ENCODE measurements at regions of chr1 and their contacts with region 1.

Region 1: GRCh38 chr1:9784508-9785133 is 39.1 kb downstream of the CLSTN1 start:
- DNase-seq: peak; percentile 84
- H3K4me3 Mint-ChIP-seq: no peak overlapping the region
- H3K27ac Mint-ChIP-seq: no peak overlapping the region
- H3K4me1 Mint-ChIP-seq: peaks cover 54% of the 10 kb centered on the region
- H3K27me3 Mint-ChIP-seq: no peaks in the 10 kb centered on the region

Region 2: DNA sequence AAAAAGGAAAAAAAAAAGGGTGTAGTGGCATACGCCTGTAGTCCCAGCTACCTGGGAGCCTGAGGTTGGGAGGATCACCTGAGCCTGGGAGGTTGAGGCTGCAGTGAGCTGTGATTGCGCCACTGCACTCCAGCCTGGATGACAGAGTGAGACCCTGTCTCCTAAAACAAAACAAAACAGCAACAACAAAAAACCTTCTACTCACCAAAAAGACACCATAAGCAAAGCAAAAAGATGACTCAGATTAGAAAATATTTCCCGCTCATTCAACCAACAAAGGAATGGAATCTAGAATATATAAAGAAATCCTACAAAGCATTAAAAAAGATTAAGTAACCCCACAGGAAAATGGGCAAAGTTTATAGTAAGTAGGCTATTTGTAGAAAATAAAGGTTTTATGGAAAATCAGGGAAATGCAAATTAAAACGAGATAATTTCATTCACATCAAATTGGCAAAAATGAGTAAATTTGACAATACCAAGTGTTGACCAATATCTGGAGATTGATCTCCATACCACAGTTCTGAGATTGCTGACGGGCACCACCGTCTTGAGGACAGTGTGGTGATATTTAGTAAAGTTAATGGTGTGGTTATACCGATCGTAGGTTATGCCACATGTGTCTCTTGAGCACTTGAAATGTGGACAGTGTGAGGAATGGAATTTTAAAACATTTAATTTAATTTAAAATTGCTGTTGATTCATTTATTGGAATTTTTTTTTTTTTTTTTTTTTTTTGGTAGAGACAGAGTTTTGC is 79.1 kb before region 1 on chr1:
- CTCF ChIA-PET with region 1: no interaction called
- POLR2A ChIA-PET with region 1: no interaction called
- DNase-seq: no peak
- H3K4me3 Mint-ChIP-seq: no peak overlapping the region
- H3K27ac Mint-ChIP-seq: peak overlapping the region; percentile 56
- H3K4me1 Mint-ChIP-seq: peaks cover 70% of the 10 kb centered on the region
- H3K27me3 Mint-ChIP-seq: no peaks in the 10 kb centered on the region

Region 3: GRCh38 chr1:9852410-9853248 is 68.0 kb after region 1 on chr1:
- CTCF ChIA-PET with region 1: no interaction called
- POLR2A ChIA-PET with region 1: no interaction called
- DNase-seq: no peak
- H3K4me3 Mint-ChIP-seq: no peak overlapping the region
- H3K27ac Mint-ChIP-seq: no peak overlapping the region
- H3K4me1 Mint-ChIP-seq: peaks cover 18% of the 10 kb centered on the region
- H3K27me3 Mint-ChIP-seq: no peaks in the 10 kb centered on the region

Region 4: DNA sequence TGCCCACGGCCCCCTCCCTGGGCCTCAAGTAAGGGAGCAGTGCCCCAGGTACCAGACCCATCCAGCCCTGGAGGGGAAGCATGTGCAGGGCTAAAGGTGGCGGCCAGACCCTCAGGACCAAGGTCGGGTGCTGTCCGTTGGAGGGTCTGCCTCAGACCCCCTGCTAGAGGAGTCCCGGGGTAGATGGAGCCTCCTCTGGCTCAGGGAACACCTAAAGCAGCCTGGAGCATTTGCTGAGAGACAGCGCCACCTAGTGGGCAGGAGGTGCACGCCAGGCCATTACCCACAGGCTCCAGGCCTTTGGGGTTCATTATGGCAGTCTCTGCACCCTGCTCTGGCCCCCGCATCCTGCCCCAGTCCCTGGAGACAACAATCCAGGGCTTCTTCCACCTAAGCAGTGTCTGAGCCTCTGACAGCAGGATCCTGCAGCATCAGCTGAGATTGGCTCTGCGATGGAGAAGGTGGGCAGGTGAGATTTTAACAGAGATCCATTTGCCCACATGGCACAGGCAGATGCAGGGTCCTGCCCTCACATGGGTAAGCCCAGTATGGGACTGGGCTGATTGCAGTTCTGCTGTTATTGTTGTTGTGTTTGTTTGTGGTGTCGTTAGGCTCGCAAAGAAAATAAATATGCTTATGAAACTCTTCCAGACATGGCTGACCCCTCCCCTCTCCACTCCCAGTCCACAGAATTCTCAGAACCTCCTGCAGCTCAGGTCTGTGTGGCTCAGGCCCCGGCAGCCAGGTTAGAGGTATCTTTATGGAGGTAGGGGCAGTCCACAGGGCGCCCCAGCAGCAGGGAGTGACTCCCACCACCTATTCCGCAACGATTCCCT is 83.0 kb after region 1 on chr1:
- CTCF ChIA-PET with region 1: interaction called, 20 read pairs
- POLR2A ChIA-PET with region 1: no interaction called
- DNase-seq: peak; percentile 91
- H3K4me3 Mint-ChIP-seq: no peak overlapping the region
- H3K27ac Mint-ChIP-seq: no peak overlapping the region
- H3K4me1 Mint-ChIP-seq: peaks cover 6% of the 10 kb centered on the region
- H3K27me3 Mint-ChIP-seq: no peaks in the 10 kb centered on the region

Measured in activated CD4-positive, alpha-beta T cell treated with anti-CD3 and anti-CD28 coated beads, Interleukin-2, amount 10 ng/mL, durations not matched to agents 7 days and 5 days (primary cell).